ENCODE measurements at regions of chr14 and their contacts with region 1.

Region 1: DNA sequence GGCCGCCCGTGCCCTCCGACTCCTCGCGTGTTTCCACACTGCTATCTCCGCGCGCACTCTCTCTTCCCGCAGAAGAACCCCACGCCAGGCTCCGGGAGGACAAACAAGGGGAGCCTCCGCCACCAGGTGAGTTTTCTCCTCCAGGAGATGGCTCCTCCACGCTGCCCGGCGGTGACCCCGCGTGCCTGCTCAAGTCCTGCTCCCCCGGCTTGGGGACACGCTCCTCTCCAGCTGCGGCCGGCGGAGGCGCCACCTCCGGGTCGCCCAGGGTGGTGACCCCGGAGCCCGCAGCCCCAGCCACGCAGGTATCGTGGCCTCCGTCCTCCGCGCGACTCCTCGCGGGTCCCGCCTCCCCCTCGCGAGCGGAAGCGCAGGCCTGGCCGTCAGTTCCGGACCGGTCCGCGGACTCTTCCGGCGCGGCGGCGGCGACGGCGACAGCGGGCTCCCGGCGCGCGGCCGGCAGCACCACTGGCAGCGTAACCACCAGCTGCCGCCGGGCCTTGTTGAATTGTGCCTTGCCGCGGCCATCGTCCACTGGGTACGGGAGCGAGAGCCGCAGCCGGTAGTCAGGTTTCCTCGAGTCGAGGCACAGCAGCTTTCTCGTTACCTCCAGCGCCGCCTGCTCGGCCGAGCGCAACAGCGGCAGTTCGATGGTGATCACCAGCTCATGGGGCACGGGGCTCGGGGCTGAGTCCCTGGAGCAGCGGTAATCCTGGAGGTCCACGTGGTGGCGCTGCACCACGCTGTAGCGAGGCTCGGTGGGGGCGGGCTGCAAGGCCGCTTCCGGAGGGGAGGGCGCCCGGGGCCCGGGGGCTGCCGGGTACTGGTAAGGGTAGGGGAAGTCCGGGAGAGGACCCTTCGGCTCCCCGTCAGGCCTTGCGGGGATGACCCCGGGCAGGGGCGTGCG is 1.2 kb downstream of the DNAAF2 start:
- DNase-seq: peak; percentile 96
- H3K4me3 Mint-ChIP-seq: peak overlapping the region; percentile 96
- H3K27ac Mint-ChIP-seq: peak overlapping the region; percentile 92
- H3K4me1 Mint-ChIP-seq: peaks cover 50% of the 10 kb centered on the region
- H3K27me3 Mint-ChIP-seq: no peaks in the 10 kb centered on the region

Region 2: DNA sequence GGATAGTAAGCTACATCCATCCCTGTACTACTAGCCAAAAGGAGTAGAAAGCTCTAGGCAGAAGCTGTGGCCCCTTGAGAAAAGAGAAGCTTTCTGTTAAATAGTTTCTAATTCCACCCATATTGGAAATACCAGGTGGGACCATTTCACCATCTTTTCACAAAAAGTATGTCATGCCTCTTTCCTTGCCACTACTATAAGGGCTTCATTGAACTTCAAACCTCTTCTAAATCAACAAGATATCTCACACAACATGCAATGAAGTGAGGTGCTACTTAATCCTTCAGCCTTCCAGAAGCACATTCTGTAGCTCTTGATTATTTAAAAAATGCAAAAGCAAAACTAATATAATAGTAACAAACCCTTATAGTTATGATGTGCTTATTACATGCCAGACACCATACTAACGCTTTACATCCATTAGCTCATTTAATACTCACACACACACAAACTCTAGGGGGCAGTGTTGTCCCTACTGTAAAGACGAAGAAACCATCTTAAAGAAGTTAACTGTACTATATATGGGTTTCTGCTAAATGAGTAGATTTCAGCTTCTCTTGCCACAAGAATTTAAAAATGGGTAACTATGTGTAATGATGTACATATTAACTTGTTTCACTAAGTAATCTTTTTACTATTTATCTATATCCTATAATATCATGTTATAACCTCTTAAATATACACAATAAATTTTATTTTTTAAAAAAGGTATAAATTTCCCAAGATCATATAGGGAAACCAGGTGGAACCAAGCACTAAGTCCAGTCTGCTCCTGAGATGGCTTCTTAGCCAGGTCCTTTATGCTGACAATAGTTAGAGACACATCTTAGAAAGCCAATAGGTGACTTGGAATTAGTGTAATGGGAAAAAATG is 172.1 kb before region 1 on chr14:
- CTCF ChIA-PET with region 1: interaction called, 4 read pairs
- intact Hi-C with region 1: loop called (anchors 1 kb)
- DNase-seq: peak; percentile 81
- H3K4me3 Mint-ChIP-seq: no peak overlapping the region
- H3K27ac Mint-ChIP-seq: no peak overlapping the region
- H3K4me1 Mint-ChIP-seq: no peaks in the 10 kb centered on the region
- H3K27me3 Mint-ChIP-seq: no peaks in the 10 kb centered on the region

Region 3: DNA sequence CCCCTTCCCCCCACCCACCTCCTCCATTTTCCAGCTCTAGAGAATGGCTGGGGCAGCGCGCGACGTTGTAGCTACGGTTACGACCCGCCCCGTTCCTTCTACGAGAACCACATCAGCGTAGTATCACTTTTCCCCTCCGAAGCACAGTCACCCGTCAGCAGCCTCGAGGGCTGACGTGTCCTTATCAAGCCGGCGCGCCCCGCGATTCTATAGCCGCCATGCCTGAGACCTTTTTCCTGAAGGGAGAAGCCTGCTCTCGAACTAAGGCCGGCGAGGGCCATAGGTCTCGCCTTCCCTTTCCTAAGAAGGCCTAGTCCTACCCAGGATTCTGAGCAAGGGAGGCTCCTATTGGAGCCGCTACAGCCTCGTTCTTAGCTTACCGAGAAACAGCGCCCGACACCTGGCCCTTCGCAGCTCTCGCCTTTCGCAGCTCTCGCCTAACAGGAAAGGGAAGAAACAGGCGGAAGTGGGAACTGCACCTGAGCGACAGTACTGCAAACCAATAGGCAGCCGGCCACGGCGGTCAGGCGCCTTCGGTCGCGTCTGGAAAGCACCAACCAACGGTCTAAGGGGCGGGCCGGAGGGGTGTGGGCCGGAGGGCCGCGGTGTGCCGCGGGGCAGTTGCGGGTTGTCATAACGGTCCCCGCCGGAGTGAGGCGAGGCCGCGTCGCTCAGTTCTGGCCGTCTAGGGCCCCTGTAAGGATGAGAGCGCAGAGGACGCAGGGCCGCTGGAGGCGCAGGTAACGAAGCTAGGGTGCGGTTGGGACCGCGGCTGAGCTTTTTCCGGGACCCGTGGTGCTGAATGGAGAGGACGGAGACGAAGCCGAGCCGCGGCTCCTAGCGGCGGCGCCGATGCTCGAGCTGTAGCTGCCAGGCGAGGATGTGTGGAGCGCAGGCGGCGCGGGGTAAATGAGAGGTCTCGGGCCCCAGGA is 13.4 kb before region 1 on chr14 and contains the starts of genes MGAT2 and RPL36AL:
- CTCF ChIA-PET with region 1: interaction called, 77 read pairs
- intact Hi-C with region 1: loop called (anchors 1 kb)
- DNase-seq: peak; percentile 97
- H3K4me3 Mint-ChIP-seq: peak within 1 kb of the TSS; percentile 97
- H3K27ac Mint-ChIP-seq: peak within 1 kb of the TSS; percentile 97
- H3K4me1 Mint-ChIP-seq: peaks cover 52% of the 10 kb centered on the region
- H3K27me3 Mint-ChIP-seq: no peaks in the 10 kb centered on the region
- total RNA-seq, gene MGAT2: 20.6 to 20.7 TPM
- total RNA-seq, gene RPL36AL: 250 to 266 TPM

Region 4: DNA sequence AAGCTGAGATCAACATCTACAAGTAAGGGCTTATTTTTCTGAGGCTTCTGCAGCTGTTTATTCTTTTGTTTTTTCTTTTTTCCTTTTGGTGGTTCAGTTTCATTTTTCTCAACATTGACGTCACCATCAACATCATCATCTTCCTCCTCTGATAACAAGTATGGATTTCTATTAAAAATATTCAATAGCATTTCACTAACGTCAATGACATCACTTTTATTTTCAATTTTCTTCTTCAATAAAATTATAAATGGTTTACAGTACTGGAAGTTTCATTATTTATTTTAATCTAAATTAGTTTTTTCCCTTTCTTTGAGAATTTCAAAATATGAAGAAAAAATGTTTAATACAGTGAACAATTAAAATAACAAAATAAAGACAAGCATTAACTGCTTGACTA is 194.7 kb after region 1 on chr14:
- CTCF ChIA-PET with region 1: interaction called, 10 read pairs
- intact Hi-C with region 1: loop called (anchors 1 kb)
- DNase-seq: no peak
- H3K4me3 Mint-ChIP-seq: no peak overlapping the region
- H3K27ac Mint-ChIP-seq: no peak overlapping the region
- H3K4me1 Mint-ChIP-seq: no peaks in the 10 kb centered on the region
- H3K27me3 Mint-ChIP-seq: no peaks in the 10 kb centered on the region

Region 5: DNA sequence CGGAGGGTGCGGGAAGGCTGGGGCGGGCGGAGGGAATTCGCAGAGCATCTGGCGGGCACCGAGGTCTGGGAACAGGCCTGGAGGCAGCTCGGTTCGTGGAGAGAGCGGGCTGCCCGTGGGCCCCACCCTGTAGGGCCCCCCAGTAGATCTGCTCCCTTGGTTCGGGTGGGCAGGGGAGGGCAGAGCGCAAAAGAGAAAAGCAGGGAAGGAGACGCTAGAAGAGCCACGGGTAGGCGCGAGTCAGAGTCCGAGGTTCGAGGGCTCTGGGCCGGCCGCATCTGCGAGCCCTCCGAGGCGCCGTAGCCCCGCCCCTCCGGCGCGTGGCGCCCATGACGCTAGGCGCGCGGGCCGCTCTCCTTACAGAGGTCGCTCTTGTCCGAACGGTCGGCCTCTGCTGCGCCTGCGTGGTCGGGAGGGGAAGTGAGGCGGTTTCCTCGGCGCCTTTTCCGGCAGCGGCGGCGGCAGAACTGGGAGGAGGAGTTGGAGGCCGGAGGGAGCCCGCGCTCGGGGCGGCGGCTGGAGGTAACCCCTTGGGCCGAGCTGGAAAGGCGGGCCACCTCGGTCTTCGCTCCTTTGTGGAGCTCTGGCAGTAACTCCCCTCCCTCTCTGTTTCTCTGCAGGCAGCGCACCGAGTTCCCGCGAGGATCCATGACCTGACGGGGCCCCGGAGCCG is 258.9 kb after region 1 on chr14 and contains the start of gene ARF6:
- CTCF ChIA-PET with region 1: no interaction called
- intact Hi-C with region 1: loop called (anchors 1 kb)
- DNase-seq: peak; percentile 98
- H3K4me3 Mint-ChIP-seq: peak within 1 kb of the TSS; percentile 100
- H3K27ac Mint-ChIP-seq: peak within 1 kb of the TSS; percentile 100
- H3K4me1 Mint-ChIP-seq: peaks cover 19% of the 10 kb centered on the region
- H3K27me3 Mint-ChIP-seq: no peaks in the 10 kb centered on the region
- total RNA-seq, gene ARF6: 128 to 129 TPM

Region 6: DNA sequence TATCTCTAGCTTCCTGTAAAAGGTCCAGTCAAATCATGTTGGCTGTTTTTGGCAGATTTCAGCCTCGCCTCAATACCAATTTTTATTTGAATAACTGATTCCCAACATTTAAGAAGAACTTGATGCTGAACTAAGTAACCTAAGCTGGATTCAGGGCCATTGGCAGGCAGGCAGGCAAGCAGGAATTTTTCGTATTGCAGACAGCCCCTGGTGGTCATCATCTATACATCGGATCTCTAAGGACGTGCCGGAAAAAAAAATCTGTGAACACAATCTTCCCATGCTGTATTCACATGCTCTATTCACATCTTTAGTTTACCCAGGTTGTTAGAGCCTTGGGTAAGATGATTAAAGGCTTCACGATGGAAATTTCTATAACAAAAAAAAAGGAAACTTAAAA is 475.4 kb after region 1 on chr14:
- CTCF ChIA-PET with region 1: interaction called, 3 read pairs
- intact Hi-C with region 1: loop called (anchors 1 kb)
- DNase-seq: no peak
- H3K4me3 Mint-ChIP-seq: no peak overlapping the region
- H3K27ac Mint-ChIP-seq: peak overlapping the region; percentile 59
- H3K4me1 Mint-ChIP-seq: peaks cover 43% of the 10 kb centered on the region
- H3K27me3 Mint-ChIP-seq: no peaks in the 10 kb centered on the region

Region 7: DNA sequence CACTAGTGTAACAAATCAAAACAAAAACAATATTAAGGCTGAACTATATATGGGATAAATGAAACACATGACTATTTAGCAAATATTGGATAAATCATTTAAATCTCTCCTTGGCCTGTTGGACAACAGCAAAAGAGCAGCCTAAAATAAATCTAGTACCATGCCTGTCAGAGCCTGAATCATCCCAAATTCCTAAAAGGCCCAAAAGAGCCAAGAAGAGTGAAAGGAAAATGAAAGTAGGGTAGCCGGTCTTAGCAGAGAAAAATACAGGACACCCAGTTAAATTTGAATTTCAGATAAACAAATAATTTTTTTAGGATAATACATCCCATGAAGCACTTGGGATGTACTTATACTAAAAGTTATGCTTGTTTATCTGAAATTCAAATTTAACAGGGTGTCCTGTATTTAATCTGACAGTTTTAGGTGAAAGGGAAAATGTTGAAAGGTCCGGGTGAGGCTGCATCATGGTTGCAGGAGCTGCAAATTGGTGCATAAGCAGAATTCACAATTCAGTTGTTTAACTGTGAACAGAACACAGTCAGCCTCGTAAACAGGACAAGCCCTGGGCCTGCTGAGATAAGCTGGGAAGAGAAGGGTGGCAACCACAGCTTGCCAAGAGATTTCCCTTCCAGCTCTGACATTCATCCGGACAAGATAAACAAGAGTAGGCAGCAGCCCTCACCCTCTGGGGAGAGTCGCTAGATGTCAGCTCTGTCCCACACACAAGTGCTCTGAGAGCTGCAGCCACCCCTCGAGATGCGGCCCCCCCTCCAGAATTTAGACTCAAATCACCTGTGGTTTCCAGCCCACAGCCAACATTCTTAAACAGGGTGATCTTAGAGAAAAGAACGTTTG is 708.6 kb after region 1 on chr14:
- CTCF ChIA-PET with region 1: no interaction called
- intact Hi-C with region 1: loop called (anchors 1 kb)
- DNase-seq: peak; percentile 79
- H3K4me3 Mint-ChIP-seq: no peak overlapping the region
- H3K27ac Mint-ChIP-seq: no peak overlapping the region
- H3K4me1 Mint-ChIP-seq: peaks cover 26% of the 10 kb centered on the region
- H3K27me3 Mint-ChIP-seq: no peaks in the 10 kb centered on the region

Measured in activated naive CD4-positive, alpha-beta T cell treated with anti-CD3 and anti-CD28 coated beads for 36 hours (primary cell).